Testis (tissue), 5 donors: ENCODE measurements at regions of chr17 and their contacts with region 1.

Region 1: GRCh38 chr17:82153745-82154375 is 55.8 kb upstream of the FASN start:
- DNase-seq: peak; percentile 89
- H3K4me3 ChIP-seq: no peak overlapping the region
- H3K27ac ChIP-seq: no peak overlapping the region
- H3K4me1 ChIP-seq: no peaks in the 10 kb centered on the region
- H3K27me3 ChIP-seq: no peaks in the 10 kb centered on the region
- CTCF ChIP-seq: peak; percentile 86 to 95 (median 91)
- POLR2A ChIP-seq: no peak

Region 2: DNA sequence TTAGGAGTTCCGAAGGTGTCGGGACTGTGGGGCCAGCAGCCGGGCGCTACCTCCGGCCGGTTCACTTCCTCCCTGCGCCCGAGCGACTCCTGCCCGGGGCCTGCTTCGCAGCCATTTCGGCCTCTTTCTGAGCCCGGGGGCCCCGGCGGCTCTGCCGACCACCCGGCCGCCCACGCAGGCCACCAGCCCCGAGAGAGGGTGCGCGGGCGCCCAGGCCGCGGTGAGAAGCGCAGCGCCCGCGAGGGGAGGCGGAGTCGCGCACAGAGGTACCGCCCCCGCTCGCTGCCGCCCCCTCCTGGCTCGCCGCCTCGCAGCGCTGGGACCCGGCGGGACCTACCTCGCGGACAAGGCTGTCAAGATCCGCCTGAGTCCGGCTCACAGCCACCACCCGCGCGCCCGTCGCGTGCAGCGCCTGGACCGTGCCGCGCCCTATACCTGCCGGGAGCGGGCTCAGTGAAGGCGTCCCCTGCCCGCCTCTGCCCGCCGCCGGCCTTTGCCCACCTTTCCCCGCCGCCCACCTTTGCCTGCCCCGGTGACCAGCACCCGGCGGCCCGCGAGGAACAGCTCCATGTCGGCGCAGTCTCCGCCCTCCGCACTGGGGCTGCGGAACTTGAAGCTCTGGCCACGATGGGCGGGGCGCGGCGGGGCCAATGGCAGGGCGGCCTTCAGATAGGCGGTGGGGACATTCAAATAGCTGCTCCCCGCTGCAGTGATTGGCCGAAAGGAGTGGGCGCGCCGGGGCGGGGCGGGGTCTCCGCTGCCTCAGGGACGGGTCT is 116.6 kb before region 1 on chr17 and contains the start of gene DCXR:
- intact Hi-C with region 1: loop called (anchors 10 kb)
- DNase-seq: peak; percentile 99
- H3K4me3 ChIP-seq: peak within 1 kb of the TSS; percentile 63 to 73
- H3K27ac ChIP-seq: peak within 1 kb of the TSS; percentile 89 to 97
- H3K4me1 ChIP-seq: peaks cover 30% of the 10 kb centered on the region
- H3K27me3 ChIP-seq: no peaks in the 10 kb centered on the region
- CTCF ChIP-seq: peak; percentile 63 to 71 (median 67)
- POLR2A ChIP-seq: peak; percentile 9
- total RNA-seq, gene DCXR: 134 to 188 TPM